ENCODE measurements at regions of chr11 and their contacts with region 1.

Region 1: DNA sequence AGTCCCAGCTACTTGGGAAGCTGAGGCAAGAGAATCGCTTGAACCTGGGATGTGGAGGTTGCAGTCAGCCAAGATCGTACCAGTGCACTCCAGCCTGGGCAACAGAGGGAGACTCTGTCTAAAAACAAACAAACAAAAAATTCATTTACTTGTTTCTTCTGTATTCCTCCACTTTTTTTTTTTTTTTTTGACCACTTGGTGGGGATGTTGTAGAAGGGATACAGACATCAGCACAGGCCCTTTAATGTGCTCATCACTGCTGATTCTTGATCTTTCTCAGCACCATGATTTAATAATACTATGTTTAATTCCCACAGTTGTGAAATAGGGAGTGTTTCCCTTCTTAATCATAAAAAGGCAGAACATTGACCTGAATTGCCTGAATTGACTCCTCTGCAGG is 4.5 kb downstream of the TTC9C start:
- DNase-seq: peak; percentile 65
- H3K4me3 ChIP-seq: no peak overlapping the region
- H3K27ac ChIP-seq: no peak overlapping the region
- H3K4me1 ChIP-seq: peaks cover 7% of the 10 kb centered on the region
- H3K27me3 ChIP-seq: no peaks in the 10 kb centered on the region
- CTCF ChIP-seq: peak; percentile 46; the same call in 1 of the 2 replicates

Region 2: DNA sequence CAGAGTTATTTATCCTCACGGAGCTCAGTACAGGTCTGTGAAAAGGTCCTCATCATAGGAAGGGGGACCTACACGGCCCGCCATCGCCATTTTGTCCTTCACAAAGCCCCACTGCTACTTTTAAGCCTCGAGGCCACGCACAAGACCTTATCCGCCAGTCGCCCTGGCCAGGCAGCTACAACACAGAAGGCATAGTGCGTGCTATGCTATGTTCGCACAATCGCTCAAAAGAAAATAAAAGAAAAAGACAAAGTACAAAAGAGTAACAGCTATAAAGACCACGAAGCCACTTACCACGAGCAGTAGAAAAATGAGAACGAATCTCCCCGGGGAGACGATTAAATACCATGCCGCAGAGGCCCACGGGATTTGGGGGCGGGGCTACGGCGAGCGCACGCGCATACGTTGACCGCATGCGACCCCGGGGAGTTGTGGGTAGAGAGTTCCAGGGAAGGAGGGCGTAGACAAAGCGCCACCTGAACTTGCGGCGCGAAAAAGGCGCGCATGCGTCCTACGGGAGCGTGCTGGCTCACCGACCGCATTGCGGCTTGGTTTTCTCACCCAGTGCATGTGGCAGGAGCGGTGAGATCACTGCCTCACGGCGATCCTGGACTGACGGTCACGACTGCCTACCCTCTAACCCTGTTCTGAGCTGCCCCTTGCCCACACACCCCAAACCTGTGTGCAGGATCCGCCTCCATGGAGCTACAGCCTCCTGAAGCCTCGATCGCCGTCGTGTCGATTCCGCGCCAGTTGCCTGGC is 123.0 kb after region 1 on chr11:
- CTCF ChIA-PET with region 1: no interaction called
- POLR2A ChIA-PET with region 1: interaction called, 4 read pairs
- intact Hi-C with region 1: loop called (anchors 5 kb)
- DNase-seq: peak; percentile 99
- H3K4me3 ChIP-seq: peak overlapping the region; percentile 70
- H3K27ac ChIP-seq: peak overlapping the region; percentile 92
- H3K4me1 ChIP-seq: peaks cover 13% of the 10 kb centered on the region
- H3K27me3 ChIP-seq: no peaks in the 10 kb centered on the region
- CTCF ChIP-seq: no peak

Region 3: GRCh38 chr11:63023841-63024648 is 291.2 kb after region 1 on chr11:
- CTCF ChIA-PET with region 1: no interaction called
- POLR2A ChIA-PET with region 1: no interaction called
- intact Hi-C with region 1: loop called (anchors 5 kb)
- DNase-seq: peak; percentile 91
- H3K4me3 ChIP-seq: no peak overlapping the region
- H3K27ac ChIP-seq: no peak overlapping the region
- H3K4me1 ChIP-seq: peaks cover 4% of the 10 kb centered on the region
- H3K27me3 ChIP-seq: no peaks in the 10 kb centered on the region
- CTCF ChIP-seq: peak; percentile 100

Region 4: DNA sequence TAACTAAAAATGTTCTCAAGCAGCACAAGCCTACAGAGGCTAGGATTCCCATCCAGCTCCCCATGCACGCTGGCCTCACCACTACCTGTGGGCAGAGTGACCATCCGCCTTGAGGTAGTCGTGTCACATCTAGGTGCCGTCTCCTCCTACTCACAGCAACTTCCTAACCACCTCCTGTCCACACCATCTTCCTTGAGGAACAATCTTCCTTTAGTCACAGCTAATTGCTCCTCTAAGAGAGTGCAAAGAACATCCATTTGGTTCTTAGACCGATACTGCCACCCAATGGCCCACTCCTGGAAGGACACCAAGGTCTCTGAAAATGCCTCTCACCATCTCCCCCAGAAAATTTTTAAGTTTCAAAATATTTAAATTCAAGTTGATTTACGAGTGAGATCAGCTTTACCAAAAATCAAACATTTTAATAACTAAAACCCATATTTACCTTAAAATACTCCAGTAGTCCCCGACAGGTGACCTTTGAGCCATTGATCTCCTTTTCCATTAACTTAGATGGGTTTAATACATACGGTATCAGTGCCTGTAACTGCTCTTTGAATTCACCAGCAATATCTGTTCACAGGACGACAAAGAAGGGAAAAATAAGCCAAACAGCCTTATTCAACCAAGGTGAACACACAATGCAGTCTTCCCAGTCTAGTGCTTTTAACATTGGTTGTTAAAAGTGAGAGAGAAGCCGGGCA is 903.1 kb after region 1 on chr11:
- CTCF ChIA-PET with region 1: no interaction called
- POLR2A ChIA-PET with region 1: no interaction called
- intact Hi-C with region 1: no loop called
- DNase-seq: peak; percentile 83
- H3K4me3 ChIP-seq: no peak overlapping the region
- H3K27ac ChIP-seq: no peak overlapping the region
- H3K4me1 ChIP-seq: no peaks in the 10 kb centered on the region
- H3K27me3 ChIP-seq: no peaks in the 10 kb centered on the region
- CTCF ChIP-seq: peak; percentile 94